K562 (cell line): ENCODE measurements at regions of chr4 and their contacts with region 1.

Region 1: DNA sequence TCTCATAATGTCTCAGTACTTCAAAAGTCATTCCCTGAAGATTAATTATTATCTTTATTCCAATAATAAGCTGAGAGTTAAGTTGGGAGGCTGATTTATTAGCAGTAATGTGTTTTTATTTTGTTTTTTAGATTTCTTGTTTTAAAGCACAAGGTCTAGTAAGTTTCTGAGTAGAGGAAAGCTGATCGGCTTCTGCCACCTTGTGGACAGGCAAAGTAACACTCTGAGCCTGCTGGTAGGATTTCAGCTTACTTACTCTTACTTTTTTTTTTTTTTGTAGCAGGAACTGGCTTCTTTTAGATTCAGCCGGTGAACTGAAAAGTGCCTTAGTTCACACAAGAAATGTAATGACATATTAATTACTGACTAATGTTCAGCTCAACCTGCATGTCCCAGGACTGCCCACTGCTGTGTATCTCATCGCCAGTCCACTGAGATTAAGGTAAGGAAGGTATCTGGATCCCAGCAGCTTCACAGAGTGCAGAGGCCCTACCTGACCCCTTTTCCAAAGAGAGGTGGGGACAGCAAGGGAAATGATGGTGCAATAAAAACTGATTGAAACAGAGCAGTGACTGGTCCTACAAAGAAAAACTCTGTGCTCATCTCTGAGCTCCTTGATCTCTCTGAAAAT is 126.5 kb downstream of the ADGRA3 start:
- DNase-seq: peak; percentile 23 to 55 (median 40)
- ATAC-seq: peak; percentile 78
- H3K4me3 ChIP-seq: no peak overlapping the region
- H3K27ac ChIP-seq: no peak overlapping the region
- H3K4me1 ChIP-seq: no peaks in the 10 kb centered on the region
- H3K27me3 ChIP-seq: no peaks in the 10 kb centered on the region
- CTCF ChIP-seq: peak; percentile 58 to 73 (median 66)
- EP300 ChIP-seq: no peak
- POLR2A ChIP-seq: no peak
- RAD21 ChIP-seq: peak; percentile 70 to 75

Region 2: DNA sequence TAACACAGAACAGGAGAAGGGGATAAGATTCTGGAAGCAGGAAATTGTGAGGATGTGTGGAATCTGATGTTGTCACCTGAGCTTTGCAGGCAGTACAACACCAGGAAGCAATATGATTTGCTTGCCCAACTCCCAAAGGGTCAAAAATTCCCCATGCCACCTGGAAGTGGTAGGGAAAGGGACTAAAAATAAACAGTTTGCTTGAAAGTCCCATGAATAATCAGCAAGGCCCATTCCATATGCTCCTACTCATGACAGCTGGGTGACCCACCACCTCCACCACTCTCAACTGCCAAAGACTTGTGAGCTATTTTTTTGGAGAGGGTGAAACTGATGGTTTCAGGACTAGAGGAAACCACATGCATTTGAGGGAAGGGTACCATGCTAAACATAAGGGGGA is 609.2 kb before region 1 on chr4:
- CTCF ChIA-PET with region 1: no interaction called
- POLR2A ChIA-PET with region 1: no interaction called
- in situ Hi-C with region 1: loop called (anchors 10 kb)
- intact Hi-C with region 1: no loop called
- DNase-seq: no peak
- ATAC-seq: no peak
- H3K4me3 ChIP-seq: no peak overlapping the region
- H3K27ac ChIP-seq: no peak overlapping the region
- H3K4me1 ChIP-seq: no peaks in the 10 kb centered on the region
- H3K27me3 ChIP-seq: no peaks in the 10 kb centered on the region
- CTCF ChIP-seq: no peak
- EP300 ChIP-seq: no peak
- POLR2A ChIP-seq: no peak
- RAD21 ChIP-seq: no peak

Region 3: DNA sequence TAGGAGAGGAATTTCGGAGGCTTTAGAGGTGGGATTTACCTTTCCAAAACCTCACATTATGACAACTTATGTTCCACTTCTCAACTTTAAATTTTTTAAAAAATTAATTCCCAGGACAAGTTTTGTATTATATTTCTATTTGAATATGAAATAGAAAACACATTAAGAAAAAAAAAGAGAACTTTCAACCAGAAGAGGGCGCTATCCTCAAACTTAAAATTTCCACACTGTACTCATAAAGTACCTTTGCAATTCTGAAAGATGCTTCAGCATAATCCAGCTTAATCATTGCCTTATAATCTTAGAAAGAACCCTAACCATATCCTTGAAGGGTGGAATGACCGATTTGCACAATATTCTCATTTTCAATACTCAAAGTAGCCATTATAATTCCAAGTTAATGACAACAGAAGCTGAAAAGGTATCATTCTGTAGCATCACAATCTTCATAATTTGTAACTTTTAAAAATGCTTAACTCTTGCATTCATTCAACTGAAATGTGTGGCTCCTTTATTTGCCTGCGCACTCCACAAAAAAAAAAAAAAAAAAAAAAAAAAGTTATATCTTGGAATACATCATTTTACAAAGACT is 598.8 kb before region 1 on chr4:
- CTCF ChIA-PET with region 1: interaction called, 39 read pairs
- POLR2A ChIA-PET with region 1: interaction called, 4 read pairs
- in situ Hi-C with region 1: loop called (anchors 10 kb)
- intact Hi-C with region 1: loop called (anchors 1 kb)
- DNase-seq: peak; percentile 3 to 18 (median 8)
- ATAC-seq: peak; percentile 44; the same call in 1 of the 3 replicates
- H3K4me3 ChIP-seq: no peak overlapping the region
- H3K27ac ChIP-seq: no peak overlapping the region
- H3K4me1 ChIP-seq: no peaks in the 10 kb centered on the region
- H3K27me3 ChIP-seq: no peaks in the 10 kb centered on the region
- CTCF ChIP-seq: peak; percentile 17 to 57 (median 20); a peak in 3 of 6 replicates
- EP300 ChIP-seq: no peak
- POLR2A ChIP-seq: no peak
- RAD21 ChIP-seq: peak; percentile 46 to 65

Region 4: DNA sequence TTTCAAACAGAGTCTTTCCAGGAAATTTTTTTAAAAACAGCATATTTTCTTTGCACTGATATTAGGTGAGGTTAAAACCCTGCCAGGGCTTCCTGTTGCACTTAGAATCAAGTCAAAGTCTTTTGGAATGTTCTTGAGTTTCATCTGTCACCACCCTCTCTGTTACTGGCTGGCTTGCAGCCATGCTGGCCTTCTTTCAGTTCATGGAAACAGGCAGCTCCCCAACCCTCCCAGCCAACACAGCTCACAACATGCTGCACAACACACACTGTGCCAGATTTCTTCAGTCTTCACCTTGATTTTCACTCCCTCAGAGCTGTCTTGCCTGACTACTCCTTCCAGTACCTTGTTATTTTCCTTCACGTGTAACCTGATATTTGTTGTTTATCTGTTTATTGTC is 570.3 kb before region 1 on chr4:
- CTCF ChIA-PET with region 1: no interaction called
- POLR2A ChIA-PET with region 1: no interaction called
- in situ Hi-C with region 1: no loop called
- intact Hi-C with region 1: no loop called
- DNase-seq: no peak
- ATAC-seq: no peak
- H3K4me3 ChIP-seq: no peak overlapping the region
- H3K27ac ChIP-seq: no peak overlapping the region
- H3K4me1 ChIP-seq: no peaks in the 10 kb centered on the region
- H3K27me3 ChIP-seq: no peaks in the 10 kb centered on the region
- CTCF ChIP-seq: no peak
- EP300 ChIP-seq: no peak
- POLR2A ChIP-seq: no peak
- RAD21 ChIP-seq: no peak